ENCODE measurements at regions of chr3 and their contacts with region 1.

Region 1: DNA sequence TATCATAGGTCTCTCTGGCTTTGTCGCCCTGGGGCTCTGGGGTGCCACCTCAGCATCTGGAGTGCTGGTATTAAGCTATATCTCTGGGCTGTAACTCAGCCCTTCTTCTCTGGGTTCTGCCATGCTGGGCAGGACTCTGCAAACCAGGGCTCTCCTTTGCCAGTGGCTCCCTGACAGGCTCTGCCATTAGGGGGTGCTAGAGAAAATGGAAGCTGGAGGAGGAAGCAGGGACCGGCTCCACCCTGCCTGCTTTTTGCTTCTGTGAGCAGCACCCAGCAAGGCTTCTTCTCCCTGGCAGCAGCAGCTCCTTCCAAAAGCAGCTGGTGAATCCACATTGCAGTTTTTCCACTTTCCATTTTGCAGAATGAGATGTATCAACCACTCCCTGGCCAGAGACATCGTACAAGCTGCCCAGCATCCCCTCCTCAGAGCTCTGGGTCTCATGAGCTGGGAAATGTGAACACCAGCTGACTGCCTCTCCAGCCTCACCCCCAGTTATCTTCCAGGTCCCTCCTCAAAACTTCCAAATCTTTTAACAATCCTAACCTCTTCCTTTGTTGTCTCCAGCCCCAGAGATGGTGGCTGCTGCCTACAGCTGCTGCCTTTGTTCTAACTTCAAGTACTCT is 165.0 kb downstream of the ABHD5 start:
- DNase-seq: peak; percentile 82
- ATAC-seq: peak; percentile 90
- H3K4me3 Mint-ChIP-seq: no peak overlapping the region
- H3K27ac Mint-ChIP-seq: no peak overlapping the region
- H3K4me1 Mint-ChIP-seq: peaks cover 40% of the 10 kb centered on the region
- H3K27me3 Mint-ChIP-seq: 0 out of 2 replicates have a peak, but pooled peaks cover 6% of the 10 kb centered on the region
- CTCF ChIP-seq: no peak; the same call in 1 of the 2 replicates

Region 2: GRCh38 chr3:43616034-43616433 is 239.8 kb before region 1 on chr3:
- CTCF ChIA-PET with region 1: no interaction called
- POLR2A ChIA-PET with region 1: no interaction called
- DNase-seq: no peak
- ATAC-seq: no peak
- H3K4me3 Mint-ChIP-seq: no peak overlapping the region
- H3K27ac Mint-ChIP-seq: 0 out of 2 replicates have a peak overlapping the region, but pooled peaks have one; percentile 56
- H3K4me1 Mint-ChIP-seq: peaks cover 13% of the 10 kb centered on the region
- H3K27me3 Mint-ChIP-seq: no peaks in the 10 kb centered on the region
- CTCF ChIP-seq: no peak

Region 3: DNA sequence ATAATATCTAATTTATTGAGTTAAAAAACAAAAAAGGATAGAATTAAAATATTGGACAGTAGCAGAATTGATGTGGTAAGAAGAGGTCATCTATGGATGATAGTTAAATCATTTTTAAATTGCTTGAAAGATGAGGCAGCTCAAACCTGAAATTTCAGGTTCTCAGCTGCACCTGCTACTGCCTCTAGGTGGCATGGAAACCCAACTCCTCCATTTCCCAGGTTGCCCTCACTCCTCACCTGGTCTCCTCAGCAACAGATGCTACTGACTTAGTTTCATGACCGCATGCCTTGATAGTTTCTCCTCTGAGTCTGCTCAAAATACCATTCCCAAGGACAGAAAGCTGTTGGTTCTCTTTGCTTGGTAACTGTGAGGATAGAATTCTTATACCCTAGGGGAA is 16.9 kb before region 1 on chr3:
- CTCF ChIA-PET with region 1: interaction called, 13 read pairs
- POLR2A ChIA-PET with region 1: no interaction called
- DNase-seq: peak; percentile 22
- ATAC-seq: peak; percentile 74
- H3K4me3 Mint-ChIP-seq: no peak overlapping the region
- H3K27ac Mint-ChIP-seq: no peak overlapping the region
- H3K4me1 Mint-ChIP-seq: no peaks in the 10 kb centered on the region
- H3K27me3 Mint-ChIP-seq: peaks cover 13% of the 10 kb centered on the region
- CTCF ChIP-seq: no peak

Region 4: GRCh38 chr3:43879166-43879565 is 23.4 kb after region 1 on chr3:
- CTCF ChIA-PET with region 1: interaction called, 17 read pairs
- POLR2A ChIA-PET with region 1: interaction called, 3 read pairs
- DNase-seq: peak; percentile 76
- ATAC-seq: peak; percentile 98
- H3K4me3 Mint-ChIP-seq: no peak overlapping the region
- H3K27ac Mint-ChIP-seq: no peak overlapping the region
- H3K4me1 Mint-ChIP-seq: peaks cover 25% of the 10 kb centered on the region
- H3K27me3 Mint-ChIP-seq: no peaks in the 10 kb centered on the region
- CTCF ChIP-seq: peak; percentile 28

Region 5: GRCh38 chr3:43923104-43923882 is 67.5 kb after region 1 on chr3:
- CTCF ChIA-PET with region 1: interaction called, 10 read pairs
- POLR2A ChIA-PET with region 1: no interaction called
- DNase-seq: no peak
- ATAC-seq: no peak
- H3K4me3 Mint-ChIP-seq: no peak overlapping the region
- H3K27ac Mint-ChIP-seq: no peak overlapping the region
- H3K4me1 Mint-ChIP-seq: peaks cover 56% of the 10 kb centered on the region
- H3K27me3 Mint-ChIP-seq: peaks cover 14% of the 10 kb centered on the region
- CTCF ChIP-seq: no peak

Region 6: GRCh38 chr3:43948013-43948412 is 92.2 kb after region 1 on chr3:
- CTCF ChIA-PET with region 1: no interaction called
- POLR2A ChIA-PET with region 1: no interaction called
- DNase-seq: no peak
- ATAC-seq: no peak
- H3K4me3 Mint-ChIP-seq: no peak overlapping the region
- H3K27ac Mint-ChIP-seq: no peak overlapping the region
- H3K4me1 Mint-ChIP-seq: peaks cover 8% of the 10 kb centered on the region; the same call in 1 of the 2 replicates
- H3K27me3 Mint-ChIP-seq: peaks cover 12% of the 10 kb centered on the region
- CTCF ChIP-seq: no peak

Region 7: DNA sequence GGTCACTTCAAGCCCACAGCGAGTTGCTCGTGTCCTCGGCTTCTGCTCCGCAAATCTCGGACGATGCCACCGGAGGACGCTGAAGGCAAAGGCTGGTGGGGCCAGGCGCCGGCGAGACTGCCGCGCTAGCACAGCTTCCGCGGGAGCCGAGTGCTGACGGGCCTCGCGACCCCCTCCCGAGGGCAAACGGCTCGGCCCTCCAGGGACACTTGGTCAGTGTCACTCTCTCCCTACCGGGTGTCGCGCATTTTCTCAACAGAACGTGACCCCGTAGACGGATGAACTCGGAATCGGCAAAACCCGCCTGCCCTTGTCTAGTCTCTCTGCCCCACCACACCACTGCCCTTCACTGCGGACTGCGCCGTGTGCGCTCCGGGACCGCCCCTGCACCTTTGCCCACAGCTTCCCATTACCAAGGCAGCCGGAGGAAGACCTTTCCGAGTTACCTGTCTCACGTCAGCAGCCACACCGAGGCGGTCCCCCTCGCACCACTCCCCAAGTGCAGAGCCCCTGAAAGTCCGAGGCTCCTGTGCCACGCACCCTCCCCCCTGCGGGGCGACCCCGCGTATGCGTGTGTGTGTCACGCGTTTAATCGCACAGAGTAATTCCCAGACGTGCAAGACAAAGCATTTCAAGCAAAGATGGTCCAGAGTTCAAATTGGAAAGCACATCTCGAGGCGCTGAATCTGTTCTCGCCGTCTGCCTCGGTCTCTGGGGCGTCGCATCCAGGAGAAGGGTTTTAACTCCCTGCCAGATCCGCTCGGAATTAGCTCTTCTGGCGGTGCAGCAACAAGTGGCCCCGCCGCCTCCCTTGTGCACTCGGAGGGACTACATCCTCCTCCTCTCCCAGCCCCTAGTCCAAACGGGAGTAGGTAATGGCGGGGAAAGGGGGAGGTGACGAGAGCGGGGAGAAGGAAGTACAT is 140.9 kb after region 1 on chr3:
- CTCF ChIA-PET with region 1: interaction called, 27 read pairs
- POLR2A ChIA-PET with region 1: interaction called, 3 read pairs
- DNase-seq: peak; percentile 58
- ATAC-seq: peak; percentile 23
- H3K4me3 Mint-ChIP-seq: peak overlapping the region; percentile 86
- H3K27ac Mint-ChIP-seq: no peak overlapping the region
- H3K4me1 Mint-ChIP-seq: peaks cover 40% of the 10 kb centered on the region
- H3K27me3 Mint-ChIP-seq: peaks cover 94% of the 10 kb centered on the region
- CTCF ChIP-seq: no peak

Region 8: DNA sequence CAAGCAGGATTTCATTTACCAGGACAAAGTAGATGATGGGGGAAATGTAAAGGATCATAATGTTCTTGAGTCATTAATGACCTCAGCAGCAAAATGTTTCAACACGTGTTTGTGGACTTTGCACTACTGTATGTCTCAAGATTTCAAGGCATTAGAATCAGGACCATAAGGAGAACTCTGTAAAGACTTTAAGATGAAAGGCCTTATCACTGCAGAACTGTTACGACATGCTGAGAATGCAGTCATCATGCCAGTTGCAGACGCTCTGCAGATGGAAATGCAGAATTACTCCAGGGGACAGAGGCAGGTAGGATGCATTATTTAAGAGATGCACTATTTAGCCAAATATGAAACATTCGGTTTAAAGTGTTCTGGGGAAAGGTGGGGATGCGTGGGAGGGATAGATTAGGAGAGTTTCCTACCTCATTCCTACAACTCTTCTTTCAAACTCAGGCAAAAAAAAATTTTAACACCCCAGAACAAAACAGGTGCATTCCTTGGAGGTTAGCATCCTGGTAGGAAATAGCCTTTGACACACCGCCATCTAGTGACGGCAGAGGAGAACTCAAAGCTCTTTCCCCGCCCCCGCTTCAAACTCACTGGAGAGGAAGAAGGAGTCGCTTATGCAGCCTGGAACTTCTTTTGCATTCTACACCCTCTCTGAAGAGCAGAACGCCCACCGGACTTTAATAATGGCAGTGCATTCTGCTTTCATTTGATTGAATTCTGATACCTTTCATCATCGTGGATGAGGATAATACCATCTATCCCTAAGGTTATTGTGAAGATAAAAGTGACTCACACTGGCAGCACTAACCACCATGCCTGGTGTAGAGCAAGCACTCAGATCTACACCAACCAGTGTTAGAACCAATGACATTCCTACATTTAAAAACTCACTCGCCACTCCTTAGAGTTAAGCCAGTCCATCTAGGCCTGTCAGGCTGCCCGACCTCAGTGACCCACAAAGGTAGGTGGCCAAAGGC is 342.8 kb after region 1 on chr3:
- CTCF ChIA-PET with region 1: interaction called, 12 read pairs
- POLR2A ChIA-PET with region 1: no interaction called
- DNase-seq: peak; percentile 77
- ATAC-seq: peak; percentile 95
- H3K4me3 Mint-ChIP-seq: no peak overlapping the region
- H3K27ac Mint-ChIP-seq: no peak overlapping the region
- H3K4me1 Mint-ChIP-seq: no peaks in the 10 kb centered on the region
- H3K27me3 Mint-ChIP-seq: no peaks in the 10 kb centered on the region
- CTCF ChIP-seq: peak; percentile 59

Region 9: GRCh38 chr3:44210967-44211366 is 355.2 kb after region 1 on chr3:
- CTCF ChIA-PET with region 1: no interaction called
- POLR2A ChIA-PET with region 1: no interaction called
- DNase-seq: no peak
- ATAC-seq: no peak
- H3K4me3 Mint-ChIP-seq: no peak overlapping the region
- H3K27ac Mint-ChIP-seq: no peak overlapping the region
- H3K4me1 Mint-ChIP-seq: no peaks in the 10 kb centered on the region
- H3K27me3 Mint-ChIP-seq: peaks cover 3% of the 10 kb centered on the region; the same call in 1 of the 2 replicates
- CTCF ChIP-seq: no peak

Measured in WTC11 (cell line).